Activated naive CD4-positive, alpha-beta T cell treated with anti-CD3 and anti-CD28 coated beads, Interleukin-2, amount 10 ng/mL, durations not matched to agents 7 days and 5 days (primary cell): ENCODE measurements at regions of chr15 and their contacts with region 1.

Region 1: GRCh38 chr15:38699633-38700230 is 135.1 kb upstream of the RASGRP1 start:
- DNase-seq: peak; percentile 86
- H3K4me3 Mint-ChIP-seq: no peak overlapping the region
- H3K27ac Mint-ChIP-seq: peak overlapping the region; percentile 64
- H3K4me1 Mint-ChIP-seq: peaks cover 66% of the 10 kb centered on the region
- H3K27me3 Mint-ChIP-seq: peaks cover 9% of the 10 kb centered on the region

Region 2: DNA sequence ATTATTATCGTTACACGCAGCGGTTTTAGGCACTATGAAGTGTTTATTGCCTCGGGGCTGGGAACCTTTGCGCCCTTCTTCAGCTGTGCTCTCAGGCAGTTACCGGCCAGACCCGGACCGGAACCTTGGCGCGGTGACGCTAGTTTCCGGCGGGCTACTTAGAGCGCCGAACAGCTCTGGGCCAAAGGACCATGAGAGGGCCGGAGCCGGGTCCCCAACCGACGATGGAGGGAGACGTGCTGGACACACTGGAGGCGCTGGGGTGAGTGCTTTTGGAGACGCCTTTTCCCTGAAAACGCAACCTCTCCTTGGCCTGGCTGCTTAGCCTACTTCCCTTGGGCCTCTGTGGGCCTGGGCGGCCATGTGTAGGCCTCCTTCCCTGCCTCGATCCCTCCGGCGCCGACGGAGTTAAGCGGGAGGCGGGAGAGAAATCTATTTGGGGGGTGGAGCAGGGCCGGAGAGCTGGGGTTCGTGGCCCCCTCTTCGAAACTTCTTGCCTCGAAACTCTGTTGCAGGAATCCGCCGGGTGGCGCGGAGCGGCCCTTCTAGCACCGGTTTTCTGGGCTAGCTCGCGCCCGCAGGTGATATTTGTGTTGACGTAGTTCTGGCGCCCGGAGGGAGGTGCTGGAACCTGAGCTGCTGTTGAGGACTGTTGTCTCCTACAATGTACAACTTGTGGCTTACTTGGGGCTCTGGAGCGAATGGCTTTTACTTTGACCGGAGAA is 245.6 kb before region 1 on chr15 and contains the start of gene FAM98B:
- CTCF ChIA-PET with region 1: interaction called, 26 read pairs
- DNase-seq: peak; percentile 88
- H3K4me3 Mint-ChIP-seq: peak within 1 kb of the TSS; percentile 93
- H3K27ac Mint-ChIP-seq: peak within 1 kb of the TSS; percentile 94
- H3K4me1 Mint-ChIP-seq: peaks cover 32% of the 10 kb centered on the region
- H3K27me3 Mint-ChIP-seq: peaks cover 18% of the 10 kb centered on the region

Region 3: DNA sequence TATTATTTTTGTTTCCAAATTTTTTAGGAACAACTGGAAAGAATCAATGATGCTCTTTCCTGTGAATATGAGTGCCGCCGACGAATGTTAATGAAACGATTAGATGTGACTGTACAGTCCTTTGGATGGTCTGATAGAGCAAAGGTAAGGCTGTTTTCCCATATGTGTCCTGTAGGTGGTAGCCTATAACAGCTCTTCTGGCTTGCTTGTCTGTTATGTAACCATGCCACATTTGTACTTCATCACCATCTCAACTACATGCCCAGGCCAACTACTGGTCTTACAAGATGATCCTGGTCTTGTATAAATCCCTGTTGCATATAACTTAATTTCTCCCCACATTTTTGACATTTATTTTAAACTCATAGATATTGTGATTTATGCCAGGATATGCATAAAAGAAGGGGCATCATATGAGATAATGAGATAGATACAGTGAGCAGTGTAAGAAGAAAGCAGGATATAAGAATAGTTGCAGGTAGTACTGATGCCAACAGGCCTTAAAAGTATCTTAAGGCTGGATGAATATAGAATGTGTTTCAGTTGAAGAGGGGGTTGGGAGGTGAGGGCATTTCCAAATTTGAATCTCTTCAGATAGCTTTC is 225.5 kb before region 1 on chr15:
- CTCF ChIA-PET with region 1: interaction called, 76 read pairs
- DNase-seq: peak; percentile 45
- H3K4me3 Mint-ChIP-seq: no peak overlapping the region
- H3K27ac Mint-ChIP-seq: peak overlapping the region; percentile 22
- H3K4me1 Mint-ChIP-seq: peaks cover 4% of the 10 kb centered on the region
- H3K27me3 Mint-ChIP-seq: no peaks in the 10 kb centered on the region

Region 4: GRCh38 chr15:38714309-38715072 is 14.8 kb after region 1 on chr15:
- CTCF ChIA-PET with region 1: no interaction called
- DNase-seq: no peak
- H3K4me3 Mint-ChIP-seq: no peak overlapping the region
- H3K27ac Mint-ChIP-seq: no peak overlapping the region
- H3K4me1 Mint-ChIP-seq: no peaks in the 10 kb centered on the region
- H3K27me3 Mint-ChIP-seq: peaks cover 7% of the 10 kb centered on the region